HepG2 (cell line): ENCODE measurements at regions of chr3 and their contacts with region 1.

Region 1: DNA sequence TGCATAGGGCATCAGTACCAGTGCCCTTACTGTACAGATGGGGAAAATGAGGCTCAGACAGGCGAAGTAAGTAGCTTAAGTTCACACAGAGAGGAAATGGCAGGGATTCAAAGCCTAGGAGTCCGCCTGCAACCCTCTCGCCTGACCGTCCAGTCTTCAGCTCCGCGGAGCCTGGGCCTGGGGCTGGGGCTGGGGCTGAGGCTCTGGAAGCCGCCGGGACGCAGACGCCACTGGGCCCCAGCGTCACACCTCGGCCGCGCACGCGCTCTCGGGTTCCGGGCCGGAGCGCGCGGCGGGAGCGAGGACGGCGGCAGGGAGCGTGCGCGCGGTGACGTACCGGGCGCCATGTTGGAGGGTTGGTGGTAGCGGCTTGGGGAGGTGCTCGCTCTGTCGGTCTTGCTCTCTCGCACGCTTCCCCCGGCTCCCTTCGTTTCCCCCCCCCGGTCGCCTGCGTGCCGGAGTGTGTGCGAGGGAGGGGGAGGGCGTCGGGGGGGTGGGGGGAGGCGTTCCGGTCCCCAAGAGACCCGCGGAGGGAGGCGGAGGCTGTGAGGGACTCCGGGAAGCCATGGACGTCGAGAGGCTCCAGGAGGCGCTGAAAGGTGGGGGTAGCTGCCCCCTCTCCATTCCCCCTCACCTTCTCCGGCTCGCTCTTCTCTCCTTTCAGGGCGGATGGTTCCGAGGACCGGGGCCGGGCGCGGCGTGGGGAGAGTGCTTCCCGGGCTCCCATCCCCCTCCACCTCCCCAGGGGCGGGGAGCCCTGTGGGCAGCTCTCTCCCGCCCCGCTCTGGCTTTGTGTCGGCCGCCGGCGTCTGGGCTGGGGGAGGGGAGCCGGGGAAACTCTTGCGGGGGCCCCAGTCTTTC is at the start of gene PPP4R2:
- DNase-seq: peak; percentile 73
- ATAC-seq: peak; percentile 92
- H3K4me3 ChIP-seq: peak within 1 kb of the TSS; percentile 80 to 99 (median 94)
- H3K27ac ChIP-seq: peak within 1 kb of the TSS; percentile 89
- H3K4me1 ChIP-seq: peaks cover 46% of the 10 kb centered on the region
- H3K27me3 ChIP-seq: no peaks in the 10 kb centered on the region; a peak in 1 of 5 replicates
- CTCF ChIP-seq: peak; percentile 34
- EP300 ChIP-seq: peak in 1 of 2 experiments; percentile 32; a peak in 1 of 4 replicates
- POLR2A ChIP-seq: peak; percentile 77 to 97
- RAD21 ChIP-seq: peak; percentile 36
- total RNA-seq, gene PPP4R2: 161 and 236 TPM in 2 replicates

Region 2: GRCh38 chr3:72847751-72848702 is 148.7 kb before region 1 on chr3 and contains the start of gene SHQ1:
- CTCF ChIA-PET with region 1: no interaction called
- POLR2A ChIA-PET with region 1: no interaction called
- in situ Hi-C with region 1: no loop called
- intact Hi-C with region 1: loop called (anchors 1 kb)
- DNase-seq: peak; percentile 91
- ATAC-seq: peak; percentile 97
- H3K4me3 ChIP-seq: peak within 1 kb of the TSS; percentile 76 to 97 (median 91)
- H3K27ac ChIP-seq: peak within 1 kb of the TSS; percentile 57
- H3K4me1 ChIP-seq: peaks cover 45% of the 10 kb centered on the region
- H3K27me3 ChIP-seq: no peaks in the 10 kb centered on the region; a peak in 1 of 5 replicates
- CTCF ChIP-seq: no peak
- EP300 ChIP-seq: no peak
- POLR2A ChIP-seq: peak; percentile 36 to 88; a peak in 3 of 4 replicates
- RAD21 ChIP-seq: 0 out of 2 replicates have a peak, but pooled peaks have one; percentile 12
- total RNA-seq, gene SHQ1: 20.3 and 25.6 TPM in 2 replicates

Region 3: DNA sequence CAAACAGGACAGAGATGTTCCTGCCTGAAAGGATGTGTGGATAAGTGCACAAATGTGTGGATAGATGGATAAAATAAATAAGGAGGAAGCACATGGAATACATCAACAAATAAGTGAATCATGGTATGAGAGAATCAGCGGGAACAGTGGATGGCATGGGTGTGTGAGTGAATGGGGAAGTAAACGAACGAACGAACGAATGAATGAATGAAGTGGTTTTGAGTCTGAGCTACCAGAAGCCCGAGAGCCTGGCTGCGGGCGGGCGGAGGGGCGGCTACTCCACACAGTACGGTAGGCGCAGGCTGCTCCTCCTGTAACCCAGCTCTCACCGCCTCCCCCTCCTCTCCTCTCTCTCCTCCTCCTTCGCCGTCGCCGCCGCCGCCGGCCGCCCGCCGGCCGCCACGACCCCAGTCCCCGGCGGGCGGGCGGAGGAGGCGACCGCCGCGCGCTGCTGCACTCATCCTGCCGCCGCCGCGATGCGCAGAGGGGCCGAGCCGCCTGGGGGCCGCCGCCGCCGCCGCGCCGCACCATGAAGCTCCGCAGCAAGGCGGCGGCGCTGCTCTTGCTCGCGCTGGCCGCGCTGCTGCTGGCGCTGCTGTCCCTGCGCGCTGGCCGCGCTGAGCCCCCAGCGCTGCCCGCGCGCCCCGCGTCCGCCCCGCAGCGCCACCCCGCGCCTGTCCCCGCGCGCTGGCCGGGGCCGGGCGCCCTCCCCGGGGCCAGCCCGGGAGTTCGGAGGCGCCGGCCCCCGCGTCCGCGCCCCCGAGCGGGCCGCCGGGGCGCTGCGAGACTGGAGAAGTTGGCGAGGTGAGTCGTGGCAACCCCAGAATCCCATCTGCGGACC is 108.8 kb before region 1 on chr3 and contains the start of gene GXYLT2:
- CTCF ChIA-PET with region 1: no interaction called
- POLR2A ChIA-PET with region 1: no interaction called
- in situ Hi-C with region 1: no loop called
- intact Hi-C with region 1: loop called (anchors 5 kb)
- DNase-seq: peak; percentile 48
- ATAC-seq: peak; percentile 78
- H3K4me3 ChIP-seq: peak within 1 kb of the TSS; percentile 70 to 90 (median 75)
- H3K27ac ChIP-seq: peak within 1 kb of the TSS; percentile 50
- H3K4me1 ChIP-seq: peaks cover 63% of the 10 kb centered on the region
- H3K27me3 ChIP-seq: no peaks in the 10 kb centered on the region; a peak in 1 of 5 replicates
- CTCF ChIP-seq: 0 out of 2 replicates have a peak, but pooled peaks have one; percentile 4
- EP300 ChIP-seq: no peak
- POLR2A ChIP-seq: no peak; a peak in 1 of 4 replicates
- RAD21 ChIP-seq: no peak; the same call in 1 of the 2 replicates
- total RNA-seq, gene GXYLT2: 6.9 and 7.4 TPM in 2 replicates

Region 4: DNA sequence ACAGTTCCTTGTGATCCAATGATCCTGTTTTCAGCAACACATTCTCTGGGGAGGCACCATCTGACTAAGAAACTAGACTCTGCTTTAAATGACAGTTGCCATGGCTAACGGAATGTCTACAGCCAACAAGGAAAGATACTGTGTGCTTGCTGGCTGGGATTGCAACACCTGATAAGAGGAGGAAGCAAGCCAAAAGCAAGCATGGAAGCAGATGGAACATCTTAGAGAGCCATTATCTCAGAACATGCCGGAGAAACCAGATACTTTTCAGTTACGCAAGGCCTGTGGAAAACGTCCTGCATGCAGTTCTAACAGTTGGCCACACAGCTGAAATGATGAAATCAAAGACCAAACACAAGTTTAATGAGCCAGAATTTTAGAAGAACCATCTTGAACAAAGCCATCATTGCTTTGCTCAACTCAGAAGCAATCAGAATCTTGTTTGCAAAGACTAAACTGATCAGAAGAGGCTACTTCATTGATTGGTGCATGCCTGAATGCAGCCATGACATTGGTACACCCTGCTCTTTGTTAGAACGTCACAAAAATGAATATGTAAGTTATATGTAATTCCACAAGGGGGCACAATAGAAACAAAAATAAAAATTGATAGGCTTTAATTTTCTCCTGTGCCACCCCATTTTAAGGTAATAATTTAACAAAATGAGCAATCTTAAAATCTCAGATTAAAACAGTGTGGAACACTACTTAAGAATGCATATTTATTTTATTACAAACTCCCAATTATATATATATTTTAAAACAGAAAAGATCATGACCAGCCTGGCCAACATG is 58.0 kb before region 1 on chr3:
- CTCF ChIA-PET with region 1: interaction called, 31 read pairs
- POLR2A ChIA-PET with region 1: interaction called, 4 read pairs
- in situ Hi-C with region 1: no loop called
- intact Hi-C with region 1: loop called (anchors 1 kb)
- DNase-seq: peak; percentile 81
- ATAC-seq: peak; percentile 98
- H3K4me3 ChIP-seq: peak overlapping the region; percentile 31 to 41 (median 36); a peak in 4 of 6 replicates
- H3K27ac ChIP-seq: peak overlapping the region; percentile 58
- H3K4me1 ChIP-seq: peaks cover 16% of the 10 kb centered on the region
- H3K27me3 ChIP-seq: no peaks in the 10 kb centered on the region
- CTCF ChIP-seq: peak; percentile 60
- EP300 ChIP-seq: peak in 1 of 2 experiments; percentile 57; a peak in 1 of 4 replicates
- POLR2A ChIP-seq: no peak
- RAD21 ChIP-seq: peak; percentile 62

Region 5: DNA sequence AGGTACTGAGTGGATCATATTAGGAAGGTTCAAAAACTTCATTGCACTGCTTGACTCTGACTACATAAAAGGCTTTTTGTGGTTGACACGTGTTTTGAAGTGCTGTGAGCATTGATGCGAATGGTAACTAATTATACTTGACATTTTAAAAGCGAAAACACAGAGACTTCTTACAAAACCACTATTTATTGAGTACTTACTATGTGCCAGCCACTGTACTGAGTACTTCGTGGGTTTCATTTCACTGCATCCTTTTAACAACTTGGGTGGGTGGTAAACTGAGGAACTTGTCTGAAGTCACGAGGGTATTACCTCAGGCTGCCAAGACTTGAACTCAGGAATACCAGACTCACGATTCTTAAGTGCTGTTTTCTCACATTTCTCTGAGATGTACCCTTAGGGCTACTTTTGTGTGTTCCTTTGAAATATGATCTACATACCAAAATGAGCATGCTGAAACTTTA is 45.4 kb before region 1 on chr3:
- CTCF ChIA-PET with region 1: no interaction called
- POLR2A ChIA-PET with region 1: interaction called, 26 read pairs
- in situ Hi-C with region 1: loop called (anchors 5 kb)
- intact Hi-C with region 1: loop called (anchors 5 kb)
- DNase-seq: no peak
- ATAC-seq: no peak
- H3K4me3 ChIP-seq: no peak overlapping the region
- H3K27ac ChIP-seq: peak overlapping the region; percentile 82
- H3K4me1 ChIP-seq: peaks cover 88% of the 10 kb centered on the region
- H3K27me3 ChIP-seq: no peaks in the 10 kb centered on the region
- CTCF ChIP-seq: no peak
- EP300 ChIP-seq: no peak
- POLR2A ChIP-seq: no peak
- RAD21 ChIP-seq: no peak

Region 6: DNA sequence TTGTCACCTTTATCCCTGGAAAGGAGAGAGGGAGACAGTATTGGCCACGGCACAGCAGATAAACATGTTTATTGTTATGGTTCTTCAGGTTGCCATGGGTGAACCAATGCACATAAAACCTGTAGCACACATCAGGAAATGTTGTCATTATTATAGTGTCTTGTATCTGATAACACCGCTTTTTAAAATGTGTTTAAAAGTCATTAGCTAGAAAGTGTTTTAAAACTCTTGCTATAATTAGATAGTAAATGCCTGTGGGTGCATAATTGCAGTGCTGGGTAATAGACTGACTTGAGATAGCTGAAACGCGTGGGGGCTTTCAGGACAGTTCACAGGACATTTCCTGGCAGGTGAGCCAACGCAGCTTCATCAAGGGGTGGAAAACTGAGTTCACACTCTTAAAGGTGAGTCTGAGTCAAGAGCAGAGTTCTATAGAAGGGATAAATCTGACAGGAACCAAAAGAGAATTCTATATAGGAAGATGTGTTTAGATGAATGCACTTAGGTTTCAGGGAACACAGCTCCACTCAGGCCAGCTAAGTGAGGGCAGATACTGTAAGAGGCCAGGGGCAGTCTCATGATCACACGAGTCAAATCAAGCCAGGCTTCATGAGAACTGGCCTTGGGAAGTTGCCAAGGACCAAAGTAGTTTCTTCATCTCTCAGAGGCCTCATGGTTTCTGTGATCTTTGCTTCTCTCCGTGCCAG is 35.7 kb before region 1 on chr3:
- CTCF ChIA-PET with region 1: no interaction called
- POLR2A ChIA-PET with region 1: interaction called, 6 read pairs
- in situ Hi-C with region 1: no loop called
- intact Hi-C with region 1: loop called (anchors 2 kb)
- DNase-seq: peak; percentile 86
- ATAC-seq: peak; percentile 62
- H3K4me3 ChIP-seq: no peak overlapping the region
- H3K27ac ChIP-seq: peak overlapping the region; percentile 79
- H3K4me1 ChIP-seq: peaks cover 89% of the 10 kb centered on the region
- H3K27me3 ChIP-seq: no peaks in the 10 kb centered on the region
- CTCF ChIP-seq: no peak
- EP300 ChIP-seq: peak in 1 of 2 experiments; percentile 46; a peak in 2 of 4 replicates
- POLR2A ChIP-seq: no peak
- RAD21 ChIP-seq: no peak

Region 7: DNA sequence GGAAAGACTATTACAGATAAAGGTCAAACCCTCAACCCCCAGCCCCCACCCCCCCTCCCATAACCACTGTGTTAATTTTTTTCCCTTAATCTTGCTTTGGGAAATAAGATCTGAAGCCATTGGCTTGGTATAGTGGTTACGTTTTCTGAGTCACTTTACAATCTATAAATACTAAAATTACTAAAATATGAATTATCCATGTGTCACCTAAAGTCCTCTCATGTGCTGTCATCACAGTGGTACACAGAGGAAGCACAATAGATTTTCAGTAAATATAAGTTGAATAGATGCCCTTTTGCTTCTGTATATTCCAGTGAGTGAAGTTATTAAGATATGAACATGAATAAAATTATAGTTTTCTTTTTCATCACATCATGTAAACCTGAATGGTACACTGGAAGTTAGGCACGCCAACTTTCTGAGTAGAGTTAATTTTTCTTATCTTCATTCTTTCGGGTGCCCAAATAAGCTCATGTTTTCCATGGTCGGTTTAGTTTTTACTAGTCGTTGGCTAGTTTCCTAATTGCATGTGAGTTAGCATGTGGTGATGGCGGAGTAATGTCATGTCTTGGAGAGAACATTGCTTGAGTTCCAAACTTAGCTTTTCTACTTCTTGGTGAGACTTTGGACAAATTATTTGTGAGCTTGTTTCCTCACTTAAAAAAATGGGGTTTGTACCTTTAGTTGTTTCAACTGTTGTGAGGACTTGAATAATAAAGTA is 11.4 kb after region 1 on chr3:
- CTCF ChIA-PET with region 1: no interaction called
- POLR2A ChIA-PET with region 1: no interaction called
- in situ Hi-C with region 1: no loop called
- intact Hi-C with region 1: no loop called
- DNase-seq: no peak
- ATAC-seq: no peak
- H3K4me3 ChIP-seq: no peak overlapping the region
- H3K27ac ChIP-seq: no peak overlapping the region
- H3K4me1 ChIP-seq: peaks cover 85% of the 10 kb centered on the region
- H3K27me3 ChIP-seq: no peaks in the 10 kb centered on the region
- CTCF ChIP-seq: no peak
- EP300 ChIP-seq: no peak
- POLR2A ChIP-seq: no peak
- RAD21 ChIP-seq: no peak

Region 8: DNA sequence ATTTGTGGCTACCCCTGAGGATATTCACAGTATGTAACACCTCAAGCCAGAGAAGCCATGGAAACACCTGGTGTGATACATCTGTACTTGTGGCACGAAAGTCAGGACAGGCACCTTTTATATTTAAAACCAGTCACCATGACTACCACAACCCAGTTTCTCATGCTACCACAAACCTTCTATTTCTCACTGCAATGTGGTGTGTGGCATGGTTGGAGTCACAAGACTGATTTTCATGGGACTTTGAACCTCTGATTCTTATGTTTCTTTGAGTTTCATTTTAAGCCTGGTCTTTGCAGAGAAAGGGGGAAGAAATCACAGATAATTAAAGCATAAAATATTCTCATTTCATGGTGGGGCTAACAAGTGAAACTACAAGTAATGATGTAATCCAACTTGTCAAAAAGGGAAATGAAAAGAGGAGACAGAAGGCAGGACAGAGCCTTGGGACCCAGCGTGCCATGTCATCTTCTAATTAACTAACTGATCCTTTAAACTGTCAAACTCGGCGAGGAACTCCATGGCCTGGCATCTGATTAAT is 452.1 kb after region 1 on chr3:
- CTCF ChIA-PET with region 1: no interaction called
- POLR2A ChIA-PET with region 1: no interaction called
- in situ Hi-C with region 1: no loop called
- intact Hi-C with region 1: no loop called
- DNase-seq: no peak
- ATAC-seq: no peak
- H3K4me3 ChIP-seq: no peak overlapping the region
- H3K27ac ChIP-seq: no peak overlapping the region
- H3K4me1 ChIP-seq: no peaks in the 10 kb centered on the region
- H3K27me3 ChIP-seq: no peaks in the 10 kb centered on the region
- CTCF ChIP-seq: no peak
- EP300 ChIP-seq: no peak
- POLR2A ChIP-seq: no peak
- RAD21 ChIP-seq: no peak